ENCODE measurements at regions of chr2 and their contacts with region 1.

Region 1: DNA sequence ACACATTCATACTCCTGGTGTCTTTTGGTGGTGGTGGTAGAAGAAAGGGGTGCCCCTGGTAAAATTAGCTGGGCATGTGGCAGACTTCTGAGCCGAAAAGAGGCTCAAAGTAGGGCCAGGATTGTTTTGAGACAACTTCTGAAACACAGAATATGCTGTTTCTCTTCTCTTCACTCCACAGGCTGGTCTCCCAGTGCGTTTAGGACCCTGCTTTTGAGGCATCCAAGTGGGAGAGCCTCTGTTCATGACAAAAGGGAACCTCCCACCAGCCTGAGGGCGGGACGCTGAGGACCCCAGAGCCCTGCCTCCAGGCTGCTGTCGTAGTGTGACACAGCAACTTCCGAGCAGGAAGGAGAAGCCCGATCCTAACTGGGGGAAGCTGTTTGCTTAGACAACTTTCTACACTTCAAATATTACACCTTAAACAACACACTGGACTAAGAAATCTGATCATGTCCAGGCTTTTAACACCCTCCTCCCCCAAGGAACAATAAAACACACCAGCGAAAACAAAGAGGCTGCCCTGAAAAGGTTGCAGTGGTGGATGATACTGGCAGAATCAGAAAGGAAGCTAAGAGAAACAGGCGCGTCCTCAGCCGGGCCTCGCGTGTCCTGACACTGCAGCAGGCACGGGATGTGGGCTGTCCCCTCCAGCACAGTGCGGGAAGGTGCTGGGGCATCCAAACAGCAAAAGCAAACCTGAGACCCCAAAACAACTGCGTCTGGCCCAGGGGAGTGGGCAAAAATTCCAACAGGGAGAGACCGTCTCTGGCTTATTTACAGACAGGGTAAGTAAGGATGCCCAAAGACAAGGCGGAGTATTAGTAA is 9.3 kb downstream of the SERTAD2 start:
- DNase-seq: peak; percentile 75
- CTCF ChIP-seq: no peak

Region 2: DNA sequence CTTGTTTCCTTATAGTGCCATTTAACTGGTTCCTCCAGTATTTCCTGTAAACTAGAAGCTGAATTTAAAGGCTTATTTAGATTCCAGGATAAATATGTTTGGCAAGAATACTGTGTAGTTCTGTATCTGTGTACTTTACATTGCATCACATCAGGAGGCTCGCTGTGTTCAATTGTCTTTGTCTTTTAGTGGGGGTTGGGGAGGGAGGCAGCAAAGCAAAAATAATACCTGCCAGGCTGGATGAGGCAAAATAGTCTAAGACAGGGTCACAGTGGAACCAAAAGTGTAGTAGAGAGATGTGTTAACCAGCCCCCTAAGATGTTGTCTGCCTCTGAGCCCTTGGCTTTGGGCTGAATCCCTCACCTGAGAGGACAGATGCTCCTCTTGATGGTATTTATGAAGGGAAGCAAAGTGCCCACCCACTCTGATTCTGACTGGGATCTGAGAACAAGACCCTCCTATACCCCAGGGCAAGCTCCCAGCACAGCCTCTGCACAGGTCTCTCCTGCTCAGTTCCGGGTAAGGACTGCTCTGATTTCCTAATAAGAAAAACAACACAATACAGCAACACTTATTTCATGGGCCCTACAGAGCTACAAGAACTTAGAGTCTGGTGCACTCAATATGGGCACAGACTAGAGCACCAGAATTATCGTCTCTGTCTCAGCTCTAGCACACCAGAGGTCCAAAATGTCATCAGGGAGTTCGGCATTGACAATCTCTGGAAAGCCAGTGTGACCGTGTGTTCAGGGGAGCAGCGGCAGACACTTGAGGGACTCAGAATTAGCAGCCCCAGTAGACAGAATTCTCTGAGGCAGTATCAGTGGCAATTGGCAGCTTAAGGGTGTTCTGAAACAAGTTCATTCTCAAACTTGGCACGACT is 127.5 kb before region 1 on chr2:
- CTCF ChIA-PET with region 1: no interaction called
- POLR2A ChIA-PET with region 1: no interaction called
- DNase-seq: no peak
- CTCF ChIP-seq: no peak

Region 3: DNA sequence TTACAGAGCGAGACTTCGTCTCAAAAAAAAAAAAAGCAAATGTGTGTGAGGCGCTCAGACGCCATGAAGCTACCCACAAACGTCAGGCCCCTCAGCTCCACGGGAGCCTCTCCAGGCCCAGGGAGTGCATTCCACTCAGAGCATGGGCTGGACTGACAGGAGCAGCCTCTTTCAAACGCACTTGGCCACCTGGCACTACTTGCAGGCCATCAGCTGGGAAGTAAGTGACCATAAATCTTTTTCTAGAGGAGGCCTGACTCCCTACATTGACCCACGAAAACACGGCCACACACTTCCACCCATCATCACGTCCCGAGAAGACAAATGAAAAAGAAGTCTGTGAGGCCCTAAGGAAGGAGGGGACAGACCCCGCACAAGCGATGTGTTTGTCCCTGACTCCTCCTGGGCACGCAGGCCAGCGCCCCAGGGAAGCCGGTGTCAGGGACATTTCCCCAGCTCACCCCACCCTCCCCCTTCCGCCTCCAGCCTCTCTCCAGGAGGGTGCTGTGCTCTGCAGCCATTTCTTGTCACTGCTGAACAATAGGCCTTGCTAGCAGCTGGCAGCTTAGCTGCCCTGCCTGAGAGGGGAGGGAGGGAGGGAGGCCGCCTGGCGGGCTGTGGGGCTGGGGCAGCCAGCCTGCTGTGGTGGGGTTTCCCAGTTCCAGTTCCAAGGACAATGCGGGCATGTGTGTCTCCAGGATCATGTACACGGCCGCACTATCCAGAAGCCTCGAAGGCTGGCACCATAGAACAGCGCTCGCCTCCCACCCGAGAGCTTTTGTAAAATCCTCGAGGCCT is 17.2 kb before region 1 on chr2:
- CTCF ChIA-PET with region 1: interaction called, 14 read pairs
- POLR2A ChIA-PET with region 1: interaction called, 3 read pairs
- DNase-seq: no peak
- CTCF ChIP-seq: no peak

Region 4: GRCh38 chr2:64695721-64696261 is 51.4 kb after region 1 on chr2:
- CTCF ChIA-PET with region 1: interaction called, 10 read pairs
- POLR2A ChIA-PET with region 1: interaction called, 4 read pairs
- DNase-seq: no peak
- CTCF ChIP-seq: no peak

Region 5: GRCh38 chr2:64750817-64751285 is 106.5 kb after region 1 on chr2:
- CTCF ChIA-PET with region 1: interaction called, 59 read pairs
- POLR2A ChIA-PET with region 1: interaction called, 8 read pairs
- DNase-seq: peak; percentile 97
- CTCF ChIP-seq: peak; percentile 4

Region 6: DNA sequence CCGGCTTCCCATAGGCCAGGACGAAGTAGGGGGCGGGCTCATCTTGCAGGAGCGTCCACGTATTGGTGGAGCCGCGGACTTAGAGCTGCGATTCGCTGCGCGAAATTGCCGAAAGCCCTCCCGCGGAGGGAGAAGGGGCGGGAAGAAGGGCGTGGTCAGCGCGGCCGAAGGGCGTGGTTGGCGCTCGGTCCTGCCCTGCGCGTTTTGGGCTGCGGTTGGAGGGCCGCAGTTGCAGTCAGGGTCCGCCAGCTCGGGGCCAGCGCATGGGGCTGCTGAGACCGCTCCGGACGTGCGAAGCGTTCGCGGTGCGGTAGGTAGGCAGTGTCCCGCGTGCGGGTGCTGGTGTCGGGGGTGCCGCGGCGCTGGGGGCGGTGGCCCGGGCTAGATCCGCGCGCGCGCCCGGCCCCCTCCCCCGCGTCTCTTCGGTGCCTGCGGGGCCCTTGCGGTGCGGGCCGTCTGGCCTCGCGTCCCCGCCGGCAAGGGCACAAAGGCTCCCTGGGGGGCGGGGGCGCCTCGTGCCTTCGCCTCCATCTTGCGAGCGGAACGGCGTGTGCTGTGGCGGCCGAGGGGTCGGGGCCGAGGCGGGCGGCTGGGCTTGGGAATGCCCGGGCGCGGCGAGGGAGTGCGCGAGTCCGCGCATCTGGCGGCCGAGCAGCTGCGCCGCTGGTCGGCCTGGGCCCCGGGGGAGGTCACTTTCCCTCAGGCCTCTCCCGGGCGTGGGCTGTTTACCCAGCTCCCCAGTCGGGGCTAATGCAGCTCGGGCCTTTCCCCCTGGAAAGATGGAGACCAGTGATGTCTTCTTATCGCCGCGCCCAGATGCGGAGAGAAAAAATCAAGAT is 412.0 kb after region 1 on chr2 and contains the start of gene CEP68:
- CTCF ChIA-PET with region 1: no interaction called
- POLR2A ChIA-PET with region 1: interaction called, 10 read pairs
- DNase-seq: peak; percentile 97
- CTCF ChIP-seq: no peak

Measured in GM10248 (cell line).